ENCODE measurements at regions of chr20 and their contacts with region 1.

Region 1: DNA sequence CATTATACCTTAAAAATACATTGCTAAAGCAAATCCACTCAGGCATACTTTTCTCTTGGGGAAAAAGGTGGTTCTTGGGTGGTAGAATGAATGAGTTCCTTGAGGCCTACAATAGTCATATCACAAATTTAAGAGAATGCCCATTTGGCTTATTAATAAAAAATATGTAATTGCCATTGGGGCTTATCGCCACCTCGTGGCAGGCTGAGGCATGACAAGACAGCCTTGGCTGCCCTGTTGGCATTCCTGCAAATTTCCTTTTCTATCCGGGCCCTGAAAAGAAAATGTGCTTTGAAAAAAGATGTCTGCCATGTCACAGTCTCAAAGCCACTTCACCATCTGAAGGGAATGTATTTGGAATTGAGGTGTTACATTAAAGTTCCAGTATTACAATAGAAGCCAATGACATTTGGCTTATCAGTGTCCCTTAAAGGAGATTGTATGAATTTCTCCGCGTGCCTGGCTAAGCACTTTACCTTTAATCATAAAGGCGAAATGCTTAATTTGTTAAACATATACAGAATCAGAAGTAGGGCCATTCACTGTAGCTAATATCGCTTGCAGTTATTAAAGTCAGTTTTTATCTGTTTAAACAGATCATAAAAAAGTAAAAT is 188.3 kb upstream of the ZFP64 start:
- DNase-seq: peak in 1 of 2 donors; percentile 50
- ATAC-seq: no peak

Region 2: DNA sequence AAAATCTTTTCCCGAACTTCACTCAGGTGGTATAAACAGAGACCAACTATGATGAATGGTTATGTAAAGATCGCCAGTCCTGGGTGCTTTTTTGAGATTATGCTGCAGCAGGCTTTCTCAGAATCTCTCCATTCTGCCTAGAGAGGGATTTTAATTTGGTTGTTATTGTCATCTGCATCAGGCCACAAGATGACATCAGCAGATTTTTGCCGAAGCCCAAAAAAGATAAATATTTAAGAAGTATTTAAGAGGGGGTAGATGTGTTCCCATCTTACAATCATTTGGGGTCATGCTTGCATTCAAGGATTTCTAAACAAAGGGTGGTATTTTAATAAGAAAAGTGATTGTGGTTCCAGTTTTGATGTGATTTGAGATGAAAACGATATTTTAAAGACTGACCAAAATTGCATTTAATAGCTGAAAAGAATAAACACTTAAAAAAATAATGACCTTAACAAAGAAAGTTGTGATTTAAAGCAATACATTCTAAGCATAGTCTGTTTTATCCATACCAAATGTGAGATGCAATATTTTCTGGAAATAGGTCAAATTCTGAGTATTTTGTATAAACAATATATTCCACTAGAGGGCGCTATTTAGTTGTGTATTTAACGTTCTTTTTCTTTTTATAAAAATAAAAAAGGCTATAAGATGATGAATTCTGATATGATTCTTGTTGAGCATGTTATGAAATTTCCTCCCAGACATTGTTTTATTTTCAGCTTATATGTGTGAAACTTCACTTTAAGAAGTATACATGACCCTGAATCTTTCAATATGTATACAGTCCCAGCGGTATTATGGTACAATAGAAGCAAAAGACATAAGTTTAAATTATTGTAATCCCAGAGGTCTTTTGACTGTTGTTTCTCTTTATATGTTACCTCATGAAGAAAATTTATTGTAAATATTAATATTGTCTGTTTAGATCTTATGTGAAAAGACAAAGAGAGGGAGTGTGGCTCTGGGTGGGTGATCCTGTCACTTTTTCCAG is 137.3 kb before region 1 on chr20:
- intact Hi-C with region 1: loop called in 1 of 2 experiments (anchors 5 kb)
- DNase-seq: no peak
- ATAC-seq: no peak